Endothelial cell of umbilical vein (primary cell): ENCODE measurements at regions of chr18 and their contacts with region 1.

Region 1: GRCh38 chr18:31555971-31556747 is 35.5 kb upstream of the TTR start:
- DNase-seq: peak; percentile 82
- H3K4me3 ChIP-seq: no peak overlapping the region
- H3K27ac ChIP-seq: no peak overlapping the region
- H3K4me1 ChIP-seq: peaks cover 3% of the 10 kb centered on the region
- H3K27me3 ChIP-seq: no peaks in the 10 kb centered on the region
- CTCF ChIP-seq: peak; percentile 49 to 65
- POLR2A ChIP-seq: no peak

Region 2: GRCh38 chr18:31610286-31611205 is 54.4 kb after region 1 on chr18:
- CTCF ChIA-PET with region 1: interaction called, 11 read pairs
- POLR2A ChIA-PET with region 1: no interaction called
- dilution Hi-C with region 1: no loop called
- intact Hi-C with region 1: no loop called
- DNase-seq: peak; percentile 26
- H3K4me3 ChIP-seq: no peak overlapping the region
- H3K27ac ChIP-seq: no peak overlapping the region
- H3K4me1 ChIP-seq: no peaks in the 10 kb centered on the region
- H3K27me3 ChIP-seq: peaks cover 7 to 9% of the 10 kb centered on the region in 2 experiments
- CTCF ChIP-seq: peak; percentile 5 to 30
- POLR2A ChIP-seq: no peak

Region 3: GRCh38 chr18:31722369-31722957 is 166.3 kb after region 1 on chr18:
- CTCF ChIA-PET with region 1: interaction called, 148 read pairs
- POLR2A ChIA-PET with region 1: no interaction called
- dilution Hi-C with region 1: no loop called
- intact Hi-C with region 1: loop called (anchors 1 kb)
- DNase-seq: peak; percentile 80
- H3K4me3 ChIP-seq: no peak overlapping the region
- H3K27ac ChIP-seq: no peak overlapping the region
- H3K4me1 ChIP-seq: peaks cover 2% of the 10 kb centered on the region
- H3K27me3 ChIP-seq: peaks cover 18 to 19% of the 10 kb centered on the region in 2 experiments
- CTCF ChIP-seq: peak; percentile 84 to 87
- POLR2A ChIP-seq: no peak

Region 4: GRCh38 chr18:31741097-31741735 is 185.1 kb after region 1 on chr18:
- CTCF ChIA-PET with region 1: interaction called, 10 read pairs
- POLR2A ChIA-PET with region 1: no interaction called
- dilution Hi-C with region 1: no loop called
- intact Hi-C with region 1: loop called (anchors 1 kb)
- DNase-seq: peak; percentile 44
- H3K4me3 ChIP-seq: no peak overlapping the region
- H3K27ac ChIP-seq: no peak overlapping the region
- H3K4me1 ChIP-seq: no peaks in the 10 kb centered on the region
- H3K27me3 ChIP-seq: no peaks in the 10 kb centered on the region
- CTCF ChIP-seq: peak; percentile 60 to 66
- POLR2A ChIP-seq: no peak

Region 5: DNA sequence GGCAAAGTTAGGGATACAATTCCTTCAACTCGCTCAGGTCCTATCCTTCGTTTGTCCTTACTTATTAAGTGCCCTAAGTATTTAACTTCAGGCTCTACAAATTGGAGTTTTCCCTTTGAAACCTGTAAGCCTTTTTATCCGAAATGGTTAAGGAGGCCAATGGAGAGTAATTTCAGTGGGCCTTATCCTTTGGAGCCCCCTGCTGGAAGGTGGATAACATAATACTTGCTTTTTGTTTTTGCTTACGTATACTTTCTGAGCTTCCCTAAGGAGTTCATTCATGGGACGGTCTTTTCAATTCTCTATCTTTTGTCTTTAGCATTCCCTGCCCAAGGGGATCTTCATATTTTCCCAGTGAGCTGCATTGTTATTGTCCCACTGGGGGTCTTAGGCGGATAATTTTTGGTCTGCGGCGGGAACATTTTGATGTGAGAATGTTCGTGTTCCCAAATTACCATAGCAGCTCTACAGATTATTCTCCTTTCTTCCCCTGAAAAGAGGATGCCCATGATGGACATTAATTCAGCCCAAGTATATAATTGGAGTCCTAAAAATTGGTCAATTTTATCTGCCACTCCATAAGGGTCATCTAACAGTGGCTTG is 421.2 kb after region 1 on chr18:
- CTCF ChIA-PET with region 1: interaction called, 32 read pairs
- POLR2A ChIA-PET with region 1: no interaction called
- dilution Hi-C with region 1: no loop called
- intact Hi-C with region 1: loop called (anchors 1 kb)
- DNase-seq: peak; percentile 48
- H3K4me3 ChIP-seq: no peak overlapping the region
- H3K27ac ChIP-seq: no peak overlapping the region
- H3K4me1 ChIP-seq: peaks cover 3% of the 10 kb centered on the region
- H3K27me3 ChIP-seq: peaks cover 0 to 5% of the 10 kb centered on the region in 2 experiments
- CTCF ChIP-seq: peak; percentile 55 to 59
- POLR2A ChIP-seq: no peak